H1 (cell line): ENCODE measurements at regions of chr2 and their contacts with region 1.

Region 1: GRCh38 chr2:209208211-209208610 is 215.6 kb upstream of the MAP2 start:
- DNase-seq: peak; percentile 21 to 62
- H3K4me3 ChIP-seq: peak overlapping the region; percentile 0 to 60 (median 32); a peak in 7 of 8 replicates
- H3K27ac ChIP-seq: no peak overlapping the region
- H3K4me1 ChIP-seq: peaks cover 0 to 2% (median 0%) of the 10 kb centered on the region in 4 experiments; a peak in 1 of 7 replicates
- H3K27me3 ChIP-seq: no peaks in the 10 kb centered on the region
- CTCF ChIP-seq: peak in 2 of 3 experiments; percentile 62 to 67; a peak in 3 of 4 replicates
- EP300 ChIP-seq: no peak
- POLR2A ChIP-seq: no peak
- RAD21 ChIP-seq: peak; percentile 90 to 91

Region 2: GRCh38 chr2:208820014-208820688 is 388.1 kb before region 1 on chr2:
- CTCF ChIA-PET with region 1: interaction called, 18 read pairs
- POLR2A ChIA-PET with region 1: no interaction called
- DNase-seq: no peak
- H3K4me3 ChIP-seq: no peak overlapping the region
- H3K27ac ChIP-seq: no peak overlapping the region
- H3K4me1 ChIP-seq: no peaks in the 10 kb centered on the region
- H3K27me3 ChIP-seq: no peaks in the 10 kb centered on the region
- CTCF ChIP-seq: peak in 2 of 3 experiments; percentile 16 to 41; a peak in 2 of 4 replicates
- EP300 ChIP-seq: no peak
- POLR2A ChIP-seq: no peak
- RAD21 ChIP-seq: peak; percentile 71 to 75

Region 3: GRCh38 chr2:209305746-209306196 is 97.6 kb after region 1 on chr2:
- CTCF ChIA-PET with region 1: no interaction called
- POLR2A ChIA-PET with region 1: interaction called, 16 read pairs
- DNase-seq: no peak
- H3K4me3 ChIP-seq: peak overlapping the region in 1 of 4 experiments; percentile 46; a peak in 1 of 8 replicates
- H3K27ac ChIP-seq: peak overlapping the region; percentile 63; the same call in 1 of the 2 replicates
- H3K4me1 ChIP-seq: peaks cover 0 to 14% (median 8%) of the 10 kb centered on the region in 4 experiments; a peak in 3 of 7 replicates
- H3K27me3 ChIP-seq: no peaks in the 10 kb centered on the region
- CTCF ChIP-seq: no peak
- EP300 ChIP-seq: no peak
- POLR2A ChIP-seq: peak in 1 of 2 experiments; percentile 64; a peak in 1 of 3 replicates
- RAD21 ChIP-seq: no peak